Mammary epithelial cell (primary cell): ENCODE measurements at regions of chr6 and their contacts with region 1.

Region 1: DNA sequence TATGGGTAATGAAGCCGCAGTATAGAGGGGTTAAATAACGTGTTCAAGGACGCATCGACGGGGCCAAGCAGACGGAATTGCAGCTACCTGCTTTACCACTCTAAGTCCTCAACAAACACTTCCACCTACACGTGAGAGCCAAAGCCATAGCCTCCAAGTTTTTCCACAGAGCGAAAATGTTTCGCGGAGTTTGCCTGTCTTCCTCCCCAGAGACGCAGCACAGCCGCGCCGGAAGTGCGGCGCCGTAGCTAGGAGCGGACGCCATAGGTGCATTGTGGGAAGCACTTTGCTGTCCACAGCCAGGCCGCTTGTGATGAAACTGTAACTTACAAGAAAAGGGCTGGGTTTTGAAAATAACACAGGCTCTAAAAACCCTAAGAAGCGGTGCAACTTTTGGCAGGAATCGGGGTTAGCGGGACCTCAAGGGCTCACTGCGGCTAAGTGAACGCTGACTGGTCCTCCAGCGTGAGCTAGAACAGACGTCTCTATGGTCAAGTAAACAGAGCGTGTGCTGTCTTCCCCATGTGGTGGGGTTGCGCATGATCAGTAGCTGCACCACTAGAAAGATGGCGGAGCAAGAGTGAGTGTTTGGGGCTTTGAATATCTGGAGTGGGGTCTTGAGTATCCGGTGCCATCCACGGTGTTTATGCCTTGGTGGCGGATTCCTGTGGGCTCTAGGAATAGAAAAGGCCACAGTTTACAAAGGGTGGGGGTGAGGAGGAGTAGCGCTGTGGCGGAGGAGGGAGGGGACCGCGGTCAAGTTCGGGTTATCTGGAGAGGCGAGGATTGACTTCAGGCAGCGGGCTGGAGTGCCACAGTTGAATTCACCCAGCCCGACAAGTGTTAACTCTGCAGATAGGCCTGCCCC is at the start of gene RPL7L1:
- DNase-seq: peak; percentile 89
- H3K4me3 ChIP-seq: peak within 1 kb of the TSS; percentile 87 to 100 (median 93)
- H3K27ac ChIP-seq: peak within 1 kb of the TSS; percentile 83
- H3K4me1 ChIP-seq: peaks cover 6% of the 10 kb centered on the region
- H3K27me3 ChIP-seq: no peaks in the 10 kb centered on the region
- CTCF ChIP-seq: no peak
- total RNA-seq, gene RPL7L1: 102 to 106 TPM

Region 2: GRCh38 chr6:42166444-42167141 is 713.0 kb before region 1 on chr6:
- CTCF ChIA-PET with region 1: no interaction called
- dilution Hi-C with region 1: no loop called
- in situ Hi-C with region 1: no loop called
- intact Hi-C with region 1: loop called (anchors 1 kb)
- DNase-seq: peak; percentile 78
- H3K4me3 ChIP-seq: no peak overlapping the region
- H3K27ac ChIP-seq: no peak overlapping the region
- H3K4me1 ChIP-seq: peaks cover 8% of the 10 kb centered on the region
- H3K27me3 ChIP-seq: no peaks in the 10 kb centered on the region
- CTCF ChIP-seq: peak; percentile 83 to 96

Region 3: GRCh38 chr6:42569102-42570028 is 310.2 kb before region 1 on chr6:
- CTCF ChIA-PET with region 1: interaction called, 6 read pairs
- dilution Hi-C with region 1: no loop called
- in situ Hi-C with region 1: no loop called
- intact Hi-C with region 1: loop called (anchors 5 kb)
- DNase-seq: peak; percentile 94
- H3K4me3 ChIP-seq: peak overlapping the region in 2 of 3 experiments; percentile 10 to 42
- H3K27ac ChIP-seq: peak overlapping the region; percentile 95
- H3K4me1 ChIP-seq: peaks cover 11% of the 10 kb centered on the region
- H3K27me3 ChIP-seq: no peaks in the 10 kb centered on the region
- CTCF ChIP-seq: peak in 1 of 2 donors; percentile 10

Region 4: GRCh38 chr6:42726485-42727086 is 153.0 kb before region 1 on chr6:
- CTCF ChIA-PET with region 1: no interaction called
- dilution Hi-C with region 1: no loop called
- in situ Hi-C with region 1: loop called in 1 of 2 experiments (anchors 25 kb)
- intact Hi-C with region 1: loop called (anchors 1 kb)
- DNase-seq: peak; percentile 64
- H3K4me3 ChIP-seq: peak overlapping the region; percentile 33 to 45 (median 39)
- H3K27ac ChIP-seq: no peak overlapping the region
- H3K4me1 ChIP-seq: peaks cover 13% of the 10 kb centered on the region
- H3K27me3 ChIP-seq: no peaks in the 10 kb centered on the region
- CTCF ChIP-seq: peak; percentile 81 to 88

Region 5: GRCh38 chr6:42788671-42789070 is 90.9 kb before region 1 on chr6:
- CTCF ChIA-PET with region 1: interaction called, 18 read pairs
- dilution Hi-C with region 1: no loop called
- in situ Hi-C with region 1: no loop called
- intact Hi-C with region 1: loop called (anchors 1 kb)
- DNase-seq: no peak
- H3K4me3 ChIP-seq: no peak overlapping the region
- H3K27ac ChIP-seq: no peak overlapping the region
- H3K4me1 ChIP-seq: peaks cover 6% of the 10 kb centered on the region
- H3K27me3 ChIP-seq: no peaks in the 10 kb centered on the region
- CTCF ChIP-seq: no peak

Region 6: GRCh38 chr6:42845327-42845694 is 34.3 kb before region 1 on chr6:
- CTCF ChIA-PET with region 1: no interaction called
- dilution Hi-C with region 1: no loop called
- in situ Hi-C with region 1: no loop called
- intact Hi-C with region 1: no loop called
- DNase-seq: no peak
- H3K4me3 ChIP-seq: no peak overlapping the region
- H3K27ac ChIP-seq: no peak overlapping the region
- H3K4me1 ChIP-seq: no peaks in the 10 kb centered on the region
- H3K27me3 ChIP-seq: no peaks in the 10 kb centered on the region
- CTCF ChIP-seq: no peak

Region 7: GRCh38 chr6:42901536-42901957 is 21.9 kb after region 1 on chr6:
- CTCF ChIA-PET with region 1: no interaction called
- dilution Hi-C with region 1: no loop called
- in situ Hi-C with region 1: no loop called
- intact Hi-C with region 1: loop called (anchors 1 kb)
- DNase-seq: peak; percentile 85
- H3K4me3 ChIP-seq: peak overlapping the region; percentile 8 to 16 (median 12)
- H3K27ac ChIP-seq: peak overlapping the region; percentile 9
- H3K4me1 ChIP-seq: peaks cover 8% of the 10 kb centered on the region
- H3K27me3 ChIP-seq: no peaks in the 10 kb centered on the region
- CTCF ChIP-seq: peak; percentile 74

Region 8: DNA sequence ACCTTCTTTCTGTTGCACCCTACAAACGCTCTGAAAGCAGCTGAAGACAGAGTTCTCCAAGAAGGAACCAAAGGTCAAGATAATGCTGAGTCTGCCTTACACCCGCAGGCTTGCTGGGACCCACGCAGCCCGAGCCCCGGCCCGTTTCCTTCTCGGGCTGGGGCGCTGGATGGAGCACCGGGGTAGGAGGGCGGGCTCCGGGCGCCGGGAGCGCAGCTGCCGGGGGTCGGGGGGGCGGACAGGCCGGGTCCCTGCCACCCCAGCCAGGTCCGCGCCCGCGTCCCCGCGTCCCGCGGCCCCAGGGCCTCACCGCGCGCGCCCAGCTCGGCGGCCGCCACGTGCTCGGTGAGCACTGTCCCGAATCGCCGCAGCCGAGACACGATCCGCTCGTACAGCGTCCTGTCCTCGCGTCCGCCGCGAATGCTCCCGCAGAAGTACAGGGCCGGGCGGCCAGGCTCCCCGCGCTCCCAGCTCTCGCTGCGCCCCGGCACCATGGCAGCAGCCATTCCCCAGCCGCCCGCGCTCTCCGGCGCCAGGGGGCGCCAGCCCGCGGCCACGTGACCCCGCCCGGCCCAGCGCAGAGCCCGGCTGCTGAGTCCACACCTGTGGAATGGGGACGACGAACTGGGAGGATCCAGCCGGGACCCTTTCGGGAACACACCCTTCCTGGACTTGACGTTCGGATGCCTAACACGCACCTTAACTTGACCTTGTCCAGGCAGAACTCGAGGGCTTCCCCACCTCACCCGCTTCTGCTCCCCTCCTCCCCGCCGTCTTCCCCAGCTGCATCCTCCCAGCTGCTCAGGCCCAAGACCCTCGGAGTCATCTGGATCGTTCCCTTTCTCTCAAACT is 349.6 kb after region 1 on chr6 and contains the start of gene DNPH1:
- CTCF ChIA-PET with region 1: no interaction called
- dilution Hi-C with region 1: no loop called
- in situ Hi-C with region 1: no loop called
- intact Hi-C with region 1: no loop called
- DNase-seq: peak; percentile 61
- H3K4me3 ChIP-seq: peak within 1 kb of the TSS; percentile 49 to 67 (median 66)
- H3K27ac ChIP-seq: peak within 1 kb of the TSS; percentile 16
- H3K4me1 ChIP-seq: peaks cover 5% of the 10 kb centered on the region
- H3K27me3 ChIP-seq: no peaks in the 10 kb centered on the region
- CTCF ChIP-seq: peak; percentile 51 to 74
- total RNA-seq, gene DNPH1: 55.2 to 56.9 TPM